Activated CD4-positive, alpha-beta T cell treated with anti-CD3 and anti-CD28 coated beads, Interleukin-2, amount 10 ng/mL, durations not matched to agents 24 days and 14 days (primary cell): ENCODE measurements at regions of chr2 and their contacts with region 1.

Region 1: GRCh38 chr2:53220969-53221368 is 546.6 kb upstream of the CHAC2 start:
- DNase-seq: no peak
- H3K4me3 Mint-ChIP-seq: no peak overlapping the region
- H3K27ac Mint-ChIP-seq: no peak overlapping the region
- H3K4me1 Mint-ChIP-seq: no peaks in the 10 kb centered on the region
- H3K27me3 Mint-ChIP-seq: no peaks in the 10 kb centered on the region

Region 2: DNA sequence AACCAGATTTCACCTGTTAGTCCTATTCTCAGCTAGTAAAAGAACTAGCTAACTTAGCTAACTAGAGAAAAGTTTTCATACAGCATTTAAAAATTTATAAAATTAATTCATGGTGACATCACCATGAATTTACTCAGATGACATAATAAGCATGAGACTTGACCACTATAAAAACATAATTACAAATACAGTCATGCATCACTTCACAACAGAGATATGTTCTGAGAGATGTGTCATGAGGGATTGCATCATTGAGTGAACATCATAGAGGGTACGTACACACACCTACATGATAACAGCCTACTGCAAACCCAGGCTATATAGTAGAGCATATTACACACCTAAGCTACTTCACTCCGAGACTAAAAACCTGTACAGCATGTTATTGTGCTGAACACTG is 65.4 kb after region 1 on chr2:
- intact Hi-C with region 1: no loop called
- DNase-seq: no peak
- H3K4me3 Mint-ChIP-seq: no peak overlapping the region
- H3K27ac Mint-ChIP-seq: no peak overlapping the region
- H3K4me1 Mint-ChIP-seq: no peaks in the 10 kb centered on the region
- H3K27me3 Mint-ChIP-seq: no peaks in the 10 kb centered on the region

Region 3: DNA sequence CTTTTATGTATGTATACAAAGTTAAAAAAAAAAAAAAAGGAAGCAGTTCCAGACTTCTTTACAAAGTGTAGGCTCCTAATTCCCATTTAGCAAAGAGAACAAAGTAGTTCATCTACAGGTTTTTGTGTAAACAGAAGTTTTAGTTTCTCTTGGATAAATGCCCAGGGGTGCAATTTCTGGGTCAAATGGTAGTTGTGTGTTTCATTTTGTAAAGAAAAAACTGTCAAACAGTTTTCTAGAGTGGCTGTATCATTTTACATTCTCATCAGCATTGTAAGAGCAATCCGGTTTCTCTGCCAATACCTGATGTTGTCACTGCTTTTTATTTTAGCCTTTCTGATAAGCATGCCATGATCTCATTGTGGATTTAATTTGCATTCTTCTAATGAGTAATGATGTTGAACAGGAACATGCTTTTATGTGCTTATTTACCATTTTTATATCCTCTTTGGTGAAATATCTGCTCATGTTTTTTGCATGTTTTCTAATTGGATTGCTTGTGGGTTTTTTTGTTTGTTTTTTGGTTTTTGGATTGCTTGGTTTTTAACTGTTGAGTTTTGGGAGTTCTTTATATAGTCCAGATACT is 766.5 kb after region 1 on chr2:
- intact Hi-C with region 1: loop called (anchors 10 kb)
- DNase-seq: no peak
- H3K4me3 Mint-ChIP-seq: no peak overlapping the region
- H3K27ac Mint-ChIP-seq: no peak overlapping the region
- H3K4me1 Mint-ChIP-seq: peaks cover 7% of the 10 kb centered on the region
- H3K27me3 Mint-ChIP-seq: no peaks in the 10 kb centered on the region